ENCODE measurements at regions of chr14 and their contacts with region 1.

Region 1: GRCh38 chr14:20970983-20971704 is 15.9 kb downstream of the RNASE2 start:
- DNase-seq: peak; percentile 48
- ATAC-seq: peak; percentile 95
- H3K4me3 ChIP-seq: peak overlapping the region; percentile 54 to 79
- H3K27ac ChIP-seq: no peak overlapping the region
- H3K4me1 ChIP-seq: no peaks in the 10 kb centered on the region
- H3K27me3 ChIP-seq: peaks cover 2% of the 10 kb centered on the region; the same call in 1 of the 2 replicates
- CTCF ChIP-seq: peak; percentile 98

Region 2: GRCh38 chr14:20697273-20698017 is 273.7 kb before region 1 on chr14:
- CTCF ChIA-PET with region 1: interaction called, 5 read pairs
- POLR2A ChIA-PET with region 1: no interaction called
- in situ Hi-C with region 1: no loop called
- intact Hi-C with region 1: loop called (anchors 5 kb)
- DNase-seq: peak; percentile 73
- ATAC-seq: peak; percentile 92
- H3K4me3 ChIP-seq: no peak overlapping the region
- H3K27ac ChIP-seq: no peak overlapping the region
- H3K4me1 ChIP-seq: no peaks in the 10 kb centered on the region; the same call in 1 of the 2 replicates
- H3K27me3 ChIP-seq: no peaks in the 10 kb centered on the region
- CTCF ChIP-seq: peak; percentile 80

Region 3: GRCh38 chr14:20855652-20856291 is 115.4 kb before region 1 on chr14:
- CTCF ChIA-PET with region 1: interaction called, 14 read pairs
- POLR2A ChIA-PET with region 1: no interaction called
- in situ Hi-C with region 1: no loop called
- intact Hi-C with region 1: loop called (anchors 1 kb)
- DNase-seq: peak; percentile 51
- ATAC-seq: peak; percentile 97
- H3K4me3 ChIP-seq: no peak overlapping the region
- H3K27ac ChIP-seq: no peak overlapping the region
- H3K4me1 ChIP-seq: no peaks in the 10 kb centered on the region; the same call in 1 of the 2 replicates
- H3K27me3 ChIP-seq: peaks cover 5% of the 10 kb centered on the region
- CTCF ChIP-seq: peak; percentile 78

Region 4: GRCh38 chr14:20956376-20956976 is 14.7 kb before region 1 on chr14:
- CTCF ChIA-PET with region 1: interaction called, 16 read pairs
- POLR2A ChIA-PET with region 1: no interaction called
- in situ Hi-C with region 1: no loop called
- intact Hi-C with region 1: no loop called
- DNase-seq: no peak
- ATAC-seq: no peak
- H3K4me3 ChIP-seq: no peak overlapping the region
- H3K27ac ChIP-seq: no peak overlapping the region
- H3K4me1 ChIP-seq: no peaks in the 10 kb centered on the region
- H3K27me3 ChIP-seq: peaks cover 6% of the 10 kb centered on the region
- CTCF ChIP-seq: no peak